GM13977 (cell line): ENCODE measurements at regions of chr15 and their contacts with region 1.

Region 1: GRCh38 chr15:99704444-99704838 is 28.8 kb downstream of the LYSMD4 start:
- DNase-seq: peak; percentile 63
- CTCF ChIP-seq: peak; percentile 71

Region 2: DNA sequence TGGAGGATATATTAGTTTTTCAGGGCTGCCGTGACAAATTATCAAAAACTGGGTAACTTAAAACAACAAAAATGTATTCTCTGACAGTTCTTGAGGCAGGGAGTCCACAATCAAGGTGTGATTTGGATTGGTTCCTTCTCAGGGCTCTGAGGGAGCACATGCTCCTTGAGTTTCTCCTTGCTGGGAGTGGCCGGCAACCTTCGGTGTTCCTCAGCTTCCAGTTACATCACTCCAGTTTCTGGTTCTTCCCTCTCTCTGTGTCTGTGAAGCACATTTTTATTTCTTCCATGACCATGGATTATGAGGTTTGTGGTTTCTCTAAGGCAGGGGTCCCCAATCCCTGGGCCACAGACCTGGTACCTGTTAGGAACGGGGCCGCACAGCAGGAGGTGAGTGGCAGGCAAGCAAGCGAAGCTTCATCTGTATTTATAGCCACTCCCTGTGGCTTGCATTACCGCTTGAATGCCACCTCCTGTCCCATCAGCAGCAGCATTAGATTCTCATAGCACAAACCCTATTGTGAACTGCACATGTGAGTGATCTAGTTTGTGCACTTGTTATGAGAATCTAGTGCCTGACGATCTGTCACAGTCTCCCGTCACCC is 428.8 kb before region 1 on chr15:
- in situ Hi-C with region 1: loop called (anchors 25 kb)
- DNase-seq: no peak
- CTCF ChIP-seq: no peak

Region 3: GRCh38 chr15:99507504-99508310 is 196.7 kb before region 1 on chr15:
- in situ Hi-C with region 1: loop called (anchors 10 kb)
- DNase-seq: peak; percentile 30
- CTCF ChIP-seq: no peak